ENCODE measurements at regions of chr22 and their contacts with region 1.

Region 1: DNA sequence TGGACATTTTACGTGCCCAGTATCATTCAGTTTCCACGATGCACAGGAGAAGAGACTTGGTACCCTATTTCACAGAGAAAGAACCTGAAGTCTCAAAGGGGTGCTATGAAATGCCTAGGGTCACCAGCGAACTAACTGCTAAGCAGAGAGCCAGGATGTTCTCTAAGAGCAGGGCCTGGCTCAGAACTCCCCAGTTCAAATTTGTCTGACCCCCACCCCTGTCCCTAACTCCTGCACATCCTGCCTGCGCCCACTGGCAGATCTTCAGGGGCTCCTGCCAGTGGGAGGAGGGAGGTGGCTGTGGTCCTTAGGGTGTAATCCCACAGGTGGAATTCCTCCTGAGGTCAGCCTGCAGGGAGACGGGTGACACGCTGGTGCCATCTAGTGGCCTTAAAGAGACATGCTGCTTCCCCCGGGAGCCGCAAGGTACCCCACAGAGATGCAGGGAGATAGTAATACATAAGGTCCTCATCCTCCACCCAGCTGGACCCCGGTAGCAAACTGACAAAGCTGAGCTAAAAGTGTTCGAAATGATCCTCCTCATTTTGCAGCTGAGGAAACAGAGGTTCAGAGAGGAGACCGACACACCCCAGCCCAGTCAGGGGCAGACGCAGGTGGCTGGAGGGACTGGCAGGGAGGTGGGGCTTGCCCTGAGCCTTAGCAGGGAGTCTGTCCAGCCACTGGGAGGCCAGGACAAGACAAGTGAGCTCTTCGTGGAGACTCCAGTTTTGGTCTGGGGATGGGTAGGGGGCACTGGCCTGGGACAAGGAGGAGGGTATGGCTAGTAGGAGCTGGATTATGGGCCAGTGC is 34.1 kb downstream of the MB start:
- DNase-seq: no peak
- H3K4me3 ChIP-seq: no peak overlapping the region
- H3K27ac ChIP-seq: peak overlapping the region in 3 of 4 donors; percentile 33 to 75 (median 62)
- H3K4me1 ChIP-seq: peaks cover 14 to 29% (median 28%) of the 10 kb centered on the region in 4 donors
- H3K27me3 ChIP-seq: no peaks in the 10 kb centered on the region
- CTCF ChIP-seq: peak; percentile 93 to 96 (median 95)
- EP300 ChIP-seq: no peak
- POLR2A ChIP-seq: no peak

Region 2: GRCh38 chr22:35135165-35135564 is 447.9 kb before region 1 on chr22:
- intact Hi-C with region 1: no loop called
- DNase-seq: no peak
- H3K4me3 ChIP-seq: no peak overlapping the region
- H3K27ac ChIP-seq: no peak overlapping the region
- H3K4me1 ChIP-seq: no peaks in the 10 kb centered on the region
- H3K27me3 ChIP-seq: peaks cover 0 to 43% (median 0%) of the 10 kb centered on the region in 4 donors
- CTCF ChIP-seq: no peak
- EP300 ChIP-seq: no peak
- POLR2A ChIP-seq: no peak

Region 3: DNA sequence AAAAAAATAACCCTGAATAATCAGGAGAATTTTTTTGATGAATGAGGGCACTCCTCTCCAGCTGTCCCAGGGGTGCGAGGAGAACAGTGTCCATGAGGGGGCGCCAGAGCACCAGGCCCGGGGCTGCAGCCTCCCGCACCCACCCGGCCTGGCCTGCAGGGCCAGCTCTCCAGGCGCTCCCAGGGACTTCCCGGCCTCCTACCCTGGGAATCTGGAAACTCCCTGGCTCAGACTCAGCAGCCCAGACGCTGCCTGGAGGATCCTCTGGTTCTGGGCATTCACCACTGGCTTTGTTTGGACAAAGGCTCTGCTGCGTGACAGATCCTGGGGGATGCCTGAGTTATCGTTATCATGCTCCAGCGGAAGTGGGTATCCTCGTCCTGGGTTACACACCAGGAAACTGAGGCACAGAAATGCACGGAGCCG is 152.2 kb before region 1 on chr22:
- intact Hi-C with region 1: loop called (anchors 1 kb)
- DNase-seq: peak; percentile 96
- H3K4me3 ChIP-seq: no peak overlapping the region
- H3K27ac ChIP-seq: peak overlapping the region; percentile 64 to 72 (median 69)
- H3K4me1 ChIP-seq: peaks cover 8 to 18% (median 15%) of the 10 kb centered on the region in 4 donors
- H3K27me3 ChIP-seq: no peaks in the 10 kb centered on the region
- CTCF ChIP-seq: peak; percentile 98 to 99 (median 99)
- EP300 ChIP-seq: no peak
- POLR2A ChIP-seq: no peak

Region 4: GRCh38 chr22:35510481-35510934 is 72.6 kb before region 1 on chr22:
- intact Hi-C with region 1: no loop called
- DNase-seq: no peak
- H3K4me3 ChIP-seq: no peak overlapping the region
- H3K27ac ChIP-seq: peak overlapping the region; percentile 69 to 87 (median 74)
- H3K4me1 ChIP-seq: peaks cover 3 to 63% (median 50%) of the 10 kb centered on the region in 4 donors
- H3K27me3 ChIP-seq: no peaks in the 10 kb centered on the region
- CTCF ChIP-seq: no peak
- EP300 ChIP-seq: no peak
- POLR2A ChIP-seq: no peak

Measured in esophagus muscularis mucosa (tissue), 4 donors.